A549 (cell line): ENCODE measurements at regions of chr11 and their contacts with region 1.

Region 1: DNA sequence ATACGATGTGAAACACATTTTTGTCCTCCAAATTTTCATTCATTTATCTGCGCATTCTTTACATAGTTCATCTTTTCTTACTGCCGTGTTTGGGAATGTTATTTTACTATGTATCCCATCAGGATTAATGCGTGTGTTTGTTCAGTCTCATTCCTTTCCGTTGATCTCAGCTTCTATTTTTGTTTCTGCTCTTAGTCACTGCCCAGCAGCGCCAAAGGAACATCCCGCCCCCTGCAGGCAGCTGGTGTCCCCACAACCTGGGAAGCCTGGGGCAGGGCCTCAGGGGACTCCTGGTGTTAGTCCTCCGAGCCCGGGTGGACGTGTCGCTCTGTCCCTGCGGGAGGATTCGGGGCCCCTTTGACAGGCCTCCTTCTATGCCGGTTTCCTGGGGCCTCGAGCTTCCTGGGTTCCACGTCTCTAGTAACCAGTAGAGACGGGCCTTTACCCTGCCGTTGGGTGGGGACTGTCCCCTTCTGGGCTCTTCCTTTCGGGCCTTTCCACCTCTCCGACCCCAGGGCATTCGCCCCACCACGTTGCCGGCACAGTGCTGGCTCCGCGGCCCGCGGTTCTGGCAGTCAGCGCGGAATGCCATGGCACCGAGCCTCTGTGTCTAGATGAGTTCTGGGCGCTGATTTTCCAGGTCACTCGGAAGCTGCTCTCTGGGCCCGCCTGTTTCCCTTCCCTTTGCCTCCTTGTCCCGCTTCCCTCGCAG is 39.8 kb downstream of the WEE1 start:
- DNase-seq: peak; percentile 97
- ATAC-seq: peak; percentile 87 to 88
- H3K4me3 ChIP-seq: peak overlapping the region; percentile 42
- H3K27ac ChIP-seq: peak overlapping the region; percentile 94 to 97
- H3K4me1 ChIP-seq: peaks cover 27% of the 10 kb centered on the region
- CTCF ChIP-seq: peak; percentile 87
- EP300 ChIP-seq: peak in 1 of 2 experiments; percentile 55; a peak in 1 of 5 replicates
- POLR2A ChIP-seq: no peak; the same call in 1 of the 2 replicates
- RAD21 ChIP-seq: peak; percentile 84 to 87

Region 2: DNA sequence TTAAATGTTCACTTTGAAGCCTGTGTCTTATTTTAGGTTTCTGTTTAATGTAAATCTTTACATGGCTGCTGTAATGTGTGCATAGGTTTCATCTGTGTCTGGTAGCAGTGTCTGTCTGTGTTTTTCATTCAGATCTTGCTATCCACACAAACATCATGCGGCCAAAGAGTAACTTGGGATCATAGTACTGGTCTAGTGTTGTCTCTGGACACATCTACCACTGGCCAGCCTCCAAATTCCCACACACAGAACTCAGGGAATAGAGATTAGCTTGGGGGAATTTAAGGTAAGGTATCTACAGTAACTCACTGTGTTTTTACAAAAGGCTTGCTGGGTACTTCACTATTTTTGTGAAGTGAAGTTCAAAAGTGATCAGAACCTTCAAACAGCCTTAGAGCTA is 184.6 kb before region 1 on chr11:
- CTCF ChIA-PET with region 1: no interaction called
- POLR2A ChIA-PET with region 1: no interaction called
- DNase-seq: no peak
- ATAC-seq: no peak; a peak in 1 of 6 replicates
- H3K4me3 ChIP-seq: no peak overlapping the region
- H3K27ac ChIP-seq: no peak overlapping the region
- H3K4me1 ChIP-seq: no peaks in the 10 kb centered on the region
- CTCF ChIP-seq: no peak
- EP300 ChIP-seq: no peak
- POLR2A ChIP-seq: no peak
- RAD21 ChIP-seq: no peak

Region 3: GRCh38 chr11:9534791-9535781 is 78.2 kb before region 1 on chr11:
- CTCF ChIA-PET with region 1: interaction called, 29 read pairs
- POLR2A ChIA-PET with region 1: no interaction called
- DNase-seq: peak in 1 of 2 experiments; percentile 71
- ATAC-seq: peak; percentile 64 to 74; a peak in 4 of 6 replicates
- H3K4me3 ChIP-seq: no peak overlapping the region
- H3K27ac ChIP-seq: peak overlapping the region; percentile 19 to 52; a peak in 4 of 6 replicates
- H3K4me1 ChIP-seq: peaks cover 16% of the 10 kb centered on the region
- CTCF ChIP-seq: peak; percentile 85
- EP300 ChIP-seq: no peak
- POLR2A ChIP-seq: no peak
- RAD21 ChIP-seq: peak; percentile 63 to 74

Region 4: DNA sequence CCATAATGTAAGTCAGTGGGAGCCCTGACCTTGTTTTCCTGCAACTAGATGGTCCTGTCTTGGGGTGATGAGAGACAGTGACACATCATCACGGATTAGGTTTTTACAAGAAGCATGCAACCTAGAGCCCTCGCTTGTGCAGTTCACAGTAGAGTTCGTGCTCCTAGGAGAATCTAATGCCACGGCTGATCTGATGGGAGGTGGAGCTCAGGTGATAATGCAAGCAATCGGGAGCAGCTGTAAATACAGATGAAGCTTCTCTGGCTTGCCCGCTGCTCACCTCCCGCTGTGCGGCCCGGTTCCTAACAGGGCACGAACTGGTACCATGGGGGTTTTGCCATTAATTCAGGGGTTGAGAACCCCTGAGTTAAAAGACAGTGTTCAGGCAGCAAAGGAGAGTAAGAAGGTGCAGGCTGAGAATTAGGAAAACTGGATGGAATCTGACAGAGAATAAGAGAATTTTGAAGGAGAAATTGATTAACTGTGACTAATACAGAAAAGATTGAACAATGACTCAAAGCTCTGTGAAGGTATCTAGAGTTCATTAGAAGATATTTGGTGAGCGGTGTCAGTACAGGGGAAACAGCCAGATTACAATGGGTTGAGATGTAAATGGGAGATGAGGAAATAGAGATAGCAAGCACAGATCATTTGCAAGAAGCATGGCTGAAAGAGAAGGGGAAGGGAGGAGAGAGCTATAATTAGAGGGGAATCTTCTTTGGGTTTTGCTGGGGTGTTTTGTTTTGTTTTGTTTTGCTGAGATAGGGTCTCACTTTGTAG is 18.8 kb before region 1 on chr11:
- CTCF ChIA-PET with region 1: interaction called, 14 read pairs
- POLR2A ChIA-PET with region 1: interaction called, 3 read pairs
- DNase-seq: no peak
- ATAC-seq: no peak; a peak in 2 of 6 replicates
- H3K4me3 ChIP-seq: no peak overlapping the region
- H3K27ac ChIP-seq: no peak overlapping the region
- H3K4me1 ChIP-seq: no peaks in the 10 kb centered on the region
- CTCF ChIP-seq: no peak
- EP300 ChIP-seq: no peak
- POLR2A ChIP-seq: no peak
- RAD21 ChIP-seq: no peak

Region 5: GRCh38 chr11:9732453-9732852 is 119.2 kb after region 1 on chr11:
- CTCF ChIA-PET with region 1: interaction called, 21 read pairs
- POLR2A ChIA-PET with region 1: no interaction called
- DNase-seq: no peak
- ATAC-seq: no peak
- H3K4me3 ChIP-seq: no peak overlapping the region
- H3K27ac ChIP-seq: no peak overlapping the region
- H3K4me1 ChIP-seq: peaks cover 12% of the 10 kb centered on the region; the same call in 2 of the 3 replicates
- CTCF ChIP-seq: no peak
- EP300 ChIP-seq: no peak
- POLR2A ChIP-seq: no peak
- RAD21 ChIP-seq: no peak

Region 6: GRCh38 chr11:9757809-9758636 is 144.7 kb after region 1 on chr11:
- CTCF ChIA-PET with region 1: interaction called, 29 read pairs
- POLR2A ChIA-PET with region 1: no interaction called
- DNase-seq: peak; percentile 83 to 92
- ATAC-seq: peak; percentile 37 to 79
- H3K4me3 ChIP-seq: peak overlapping the region; percentile 70
- H3K27ac ChIP-seq: peak overlapping the region; percentile 95 to 98
- H3K4me1 ChIP-seq: peaks cover 43% of the 10 kb centered on the region
- CTCF ChIP-seq: peak; percentile 92
- EP300 ChIP-seq: no peak
- POLR2A ChIP-seq: peak; percentile 82
- RAD21 ChIP-seq: peak; percentile 70 to 99; a peak in 4 of 5 replicates

Region 7: DNA sequence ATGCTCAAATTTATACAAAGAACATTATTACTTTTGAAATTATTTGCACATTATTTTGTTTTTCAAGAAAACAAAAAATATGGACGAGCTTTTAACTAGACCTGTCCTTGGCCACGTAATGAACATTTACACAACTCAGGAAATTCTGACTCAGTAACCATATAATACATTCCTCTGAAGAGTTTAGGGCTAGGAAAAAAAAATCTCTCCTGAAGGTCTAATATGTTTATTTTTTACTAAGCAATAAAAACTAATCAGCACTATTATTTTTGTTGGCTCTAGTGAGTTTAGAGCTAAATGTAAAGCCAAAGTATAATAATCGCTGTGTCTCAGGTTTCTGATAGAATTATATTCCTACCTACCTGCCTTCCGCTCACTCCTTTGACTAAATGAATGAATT is 238.1 kb after region 1 on chr11:
- CTCF ChIA-PET with region 1: no interaction called
- POLR2A ChIA-PET with region 1: no interaction called
- DNase-seq: no peak
- ATAC-seq: no peak
- H3K4me3 ChIP-seq: no peak overlapping the region
- H3K27ac ChIP-seq: no peak overlapping the region
- H3K4me1 ChIP-seq: peaks cover 10% of the 10 kb centered on the region; the same call in 2 of the 3 replicates
- CTCF ChIP-seq: no peak
- EP300 ChIP-seq: no peak
- POLR2A ChIP-seq: no peak
- RAD21 ChIP-seq: no peak